Activated T-helper 1 cell treated with anti-CD3 and anti-CD28 coated beads, Interleukin-12 subunit alpha, Interleukin-12 subunit beta, Interleukin-2, Interleukin-4 antibody, amounts not matched to agents 30 ng/mL and 10 ng/mL and 1 ng/mL, durations not matched to agents 14 hours and 24 hours and 36 hours (primary cell): ENCODE measurements at regions of chr11 and their contacts with region 1.

Region 1: DNA sequence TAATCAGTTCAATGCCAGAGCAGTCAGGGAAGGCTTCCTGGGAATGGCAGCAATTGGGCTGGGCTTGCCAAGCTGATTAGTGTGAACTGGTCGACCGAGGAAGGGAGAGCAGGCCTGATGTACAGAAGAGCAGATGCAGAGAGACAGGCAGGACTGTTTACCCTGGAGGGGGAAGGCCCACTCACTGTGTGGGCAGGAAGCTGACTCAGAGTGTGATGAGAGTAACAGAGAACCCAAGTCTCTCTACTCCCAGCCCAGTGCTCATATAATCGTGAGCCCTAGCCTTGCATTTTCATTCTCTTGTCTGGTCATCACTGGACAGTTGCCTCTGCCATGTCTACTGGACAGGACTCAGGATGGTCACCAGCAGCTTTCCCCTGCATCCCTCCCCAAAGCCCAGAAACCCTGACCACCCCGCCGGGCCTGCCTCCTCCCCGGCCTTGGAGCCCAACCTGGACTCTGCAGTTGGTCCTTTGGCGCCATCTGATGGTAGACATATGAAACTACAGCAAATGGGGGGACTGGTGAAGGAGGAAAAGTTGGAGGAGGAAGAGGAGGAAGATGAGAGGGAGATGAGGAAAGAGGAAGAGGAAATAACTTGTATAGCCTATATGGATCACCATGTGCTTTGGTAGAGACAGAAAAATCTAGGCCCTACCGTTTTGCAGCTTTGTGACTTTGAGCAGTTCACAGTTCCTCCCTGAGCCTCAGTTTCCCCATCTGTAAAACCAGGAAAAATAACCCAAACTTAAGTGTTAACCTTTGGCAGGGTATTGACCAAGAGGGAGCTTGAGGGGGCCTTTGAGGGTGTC is 43.4 kb upstream of the PRDM11 start:
- DNase-seq: peak; percentile 55
- H3K4me3 Mint-ChIP-seq: peak overlapping the region; percentile 65
- H3K27ac Mint-ChIP-seq: peak overlapping the region; percentile 0
- H3K4me1 Mint-ChIP-seq: peaks cover 26% of the 10 kb centered on the region
- H3K27me3 Mint-ChIP-seq: peaks cover 21% of the 10 kb centered on the region

Region 2: GRCh38 chr11:44727373-44728287 is 375.4 kb before region 1 on chr11:
- intact Hi-C with region 1: loop called (anchors 5 kb)
- DNase-seq: peak; percentile 72
- H3K4me3 Mint-ChIP-seq: peak overlapping the region; percentile 83
- H3K27ac Mint-ChIP-seq: no peak overlapping the region
- H3K4me1 Mint-ChIP-seq: peaks cover 36% of the 10 kb centered on the region
- H3K27me3 Mint-ChIP-seq: peaks cover 17% of the 10 kb centered on the region

Region 3: GRCh38 chr11:44861849-44862749 is 240.9 kb before region 1 on chr11:
- intact Hi-C with region 1: loop called (anchors 2 kb)
- DNase-seq: peak; percentile 76
- H3K4me3 Mint-ChIP-seq: no peak overlapping the region
- H3K27ac Mint-ChIP-seq: peak overlapping the region; percentile 68
- H3K4me1 Mint-ChIP-seq: peaks cover 21% of the 10 kb centered on the region
- H3K27me3 Mint-ChIP-seq: peaks cover 56% of the 10 kb centered on the region

Region 4: GRCh38 chr11:44927174-44927661 is 175.8 kb before region 1 on chr11:
- intact Hi-C with region 1: loop called (anchors 1 kb)
- DNase-seq: peak; percentile 22
- H3K4me3 Mint-ChIP-seq: no peak overlapping the region
- H3K27ac Mint-ChIP-seq: no peak overlapping the region
- H3K4me1 Mint-ChIP-seq: peaks cover 6% of the 10 kb centered on the region
- H3K27me3 Mint-ChIP-seq: peaks cover 5% of the 10 kb centered on the region

Region 5: DNA sequence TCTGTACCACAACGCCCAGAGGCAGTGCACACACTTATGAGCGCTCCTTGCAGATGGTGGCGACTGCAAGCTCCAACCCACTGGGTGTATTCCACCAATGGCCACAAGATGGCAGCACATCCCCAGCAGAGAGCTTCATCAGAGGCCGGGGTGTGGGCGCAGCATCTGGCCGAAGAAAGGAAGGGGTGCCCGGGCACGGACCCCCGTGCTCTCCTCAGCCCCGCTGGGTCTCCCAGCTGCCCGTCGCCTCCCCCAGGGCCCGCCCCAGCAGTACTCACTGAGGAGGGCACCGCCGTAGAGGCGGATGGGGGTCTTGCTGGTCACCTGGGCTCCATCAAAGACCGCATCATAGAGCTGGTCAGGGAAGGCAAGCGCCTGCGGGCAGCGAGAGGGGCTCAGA is 166.5 kb before region 1 on chr11:
- intact Hi-C with region 1: loop called (anchors 1 kb)
- DNase-seq: peak; percentile 70
- H3K4me3 Mint-ChIP-seq: no peak overlapping the region
- H3K27ac Mint-ChIP-seq: no peak overlapping the region
- H3K4me1 Mint-ChIP-seq: no peaks in the 10 kb centered on the region
- H3K27me3 Mint-ChIP-seq: peaks cover 5% of the 10 kb centered on the region

Region 6: GRCh38 chr11:44950625-44951476 is 152.2 kb before region 1 on chr11 and contains the start of gene TP53I11:
- intact Hi-C with region 1: loop called (anchors 1 kb)
- DNase-seq: peak; percentile 47
- H3K4me3 Mint-ChIP-seq: peak within 1 kb of the TSS; percentile 62
- H3K27ac Mint-ChIP-seq: no peak within 1 kb of the TSS
- H3K4me1 Mint-ChIP-seq: peaks cover 14% of the 10 kb centered on the region
- H3K27me3 Mint-ChIP-seq: peaks cover 25% of the 10 kb centered on the region
- total RNA-seq, gene TP53I11: 5.7 TPM in 2 replicates

Region 7: GRCh38 chr11:45062971-45063611 is 39.9 kb before region 1 on chr11:
- intact Hi-C with region 1: no loop called
- DNase-seq: no peak
- H3K4me3 Mint-ChIP-seq: no peak overlapping the region
- H3K27ac Mint-ChIP-seq: no peak overlapping the region
- H3K4me1 Mint-ChIP-seq: no peaks in the 10 kb centered on the region
- H3K27me3 Mint-ChIP-seq: peaks cover 5% of the 10 kb centered on the region

Region 8: GRCh38 chr11:45193695-45194094 is 90.7 kb after region 1 on chr11:
- intact Hi-C with region 1: no loop called
- DNase-seq: no peak
- H3K4me3 Mint-ChIP-seq: no peak overlapping the region
- H3K27ac Mint-ChIP-seq: no peak overlapping the region
- H3K4me1 Mint-ChIP-seq: no peaks in the 10 kb centered on the region
- H3K27me3 Mint-ChIP-seq: peaks cover 2% of the 10 kb centered on the region